Common myeloid progenitor, CD34-positive (primary cell): ENCODE measurements at regions of chr19 and their contacts with region 1.

Region 1: DNA sequence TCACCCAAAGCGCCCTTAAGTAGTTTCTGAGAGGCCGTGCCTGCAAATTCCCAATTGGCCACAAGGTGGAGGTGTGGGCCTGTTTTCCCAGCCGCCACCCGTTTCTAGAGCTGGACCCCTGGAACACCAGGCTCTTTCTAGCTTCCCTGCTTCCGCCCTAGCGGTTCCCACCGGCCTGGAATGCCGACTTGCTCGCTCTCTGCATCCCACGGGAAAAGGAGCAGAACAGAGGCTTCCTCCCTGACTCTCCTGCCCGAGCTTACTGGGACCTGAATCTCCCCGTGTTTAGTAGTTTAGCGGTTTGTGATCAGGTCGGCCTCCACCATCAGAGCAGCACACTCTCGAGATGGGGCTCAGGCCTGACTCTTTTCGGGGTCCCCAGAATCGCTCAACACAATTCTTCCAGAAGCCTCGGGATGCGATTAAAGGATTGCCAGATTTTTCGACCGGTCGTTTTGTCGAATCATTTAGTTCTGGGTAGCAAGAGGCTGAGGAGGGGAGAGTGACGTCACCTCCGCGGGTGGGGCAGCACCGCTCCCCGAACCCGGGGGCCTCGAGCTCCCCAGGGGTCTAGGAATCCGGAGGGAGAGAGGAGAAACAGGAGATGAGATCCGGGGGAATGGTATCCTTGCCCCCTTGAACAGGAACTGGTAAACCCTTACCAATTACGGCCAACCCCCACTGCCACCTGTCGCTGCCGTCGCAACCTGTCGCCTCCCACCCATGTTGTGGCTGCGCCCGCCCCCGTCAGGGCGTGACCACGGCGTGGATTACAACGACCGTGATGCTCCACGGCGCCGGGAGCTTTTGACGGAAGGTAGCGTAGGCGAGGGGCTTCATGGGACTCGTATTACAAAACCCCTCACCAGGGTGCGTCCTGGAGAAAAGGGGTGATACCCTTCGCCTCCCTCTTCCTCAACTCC is 8.0 kb downstream of the NAPSA start:
- DNase-seq: peak; percentile 84 to 95 (median 91)
- H3K4me3 ChIP-seq: peak overlapping the region; percentile 35 to 87 (median 81)
- H3K27ac ChIP-seq: peak overlapping the region; percentile 62 to 87
- H3K4me1 ChIP-seq: peaks cover 0 to 11% (median 8%) of the 10 kb centered on the region in 4 experiments
- H3K27me3 ChIP-seq: peaks cover 0 to 4% (median 0%) of the 10 kb centered on the region in 5 experiments

Region 2: DNA sequence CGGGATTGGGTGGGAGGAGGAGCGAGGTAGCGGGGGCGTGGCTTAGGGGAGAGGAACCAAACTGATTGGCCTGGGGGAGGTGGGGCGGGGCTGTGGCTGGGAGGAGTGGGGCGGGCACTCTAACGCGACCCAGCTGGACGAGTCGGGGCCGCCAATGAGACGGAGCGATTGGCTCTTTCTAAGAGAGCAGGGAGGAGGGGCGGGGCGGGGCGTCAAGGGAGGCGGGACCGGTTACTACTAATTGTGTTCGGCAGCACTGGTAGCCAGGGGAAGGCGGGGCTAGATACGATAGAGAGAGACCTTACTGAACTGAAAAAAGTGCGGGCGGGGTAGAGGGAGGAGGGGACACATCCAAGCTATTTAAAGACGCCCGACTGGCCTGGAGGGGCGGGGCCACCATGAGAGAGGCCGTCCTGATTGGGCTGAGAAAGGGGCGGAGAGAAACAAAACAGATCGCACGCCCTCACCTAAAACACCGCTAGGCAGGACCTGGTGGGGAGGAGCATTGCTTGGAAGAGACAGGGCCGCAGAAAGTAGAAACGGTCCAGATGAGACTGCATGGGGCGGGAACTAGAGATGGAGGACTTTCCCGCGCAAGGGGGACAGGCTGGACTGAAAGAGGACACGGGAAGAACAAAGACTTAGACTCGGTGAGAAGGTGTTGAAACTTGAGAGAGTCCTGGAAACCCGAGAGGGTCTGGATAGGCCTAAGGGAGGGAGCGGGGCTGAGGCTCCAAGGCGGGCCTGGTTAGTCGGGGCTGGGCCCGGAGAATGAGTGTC is 28.1 kb before region 1 on chr19 and contains the start of gene KCNC3:
- CTCF ChIA-PET with region 1: no interaction called
- POLR2A ChIA-PET with region 1: no interaction called
- DNase-seq: peak; percentile 95 to 97 (median 96)
- H3K4me3 ChIP-seq: peak within 1 kb of the TSS in 4 of 7 experiments; percentile 19 to 40 (median 27)
- H3K27ac ChIP-seq: peak within 1 kb of the TSS in 1 of 2 experiments; percentile 68
- H3K4me1 ChIP-seq: peaks cover 2 to 54% (median 33%) of the 10 kb centered on the region in 4 experiments
- H3K27me3 ChIP-seq: peaks cover 0 to 85% (median 35%) of the 10 kb centered on the region in 5 experiments

Region 3: DNA sequence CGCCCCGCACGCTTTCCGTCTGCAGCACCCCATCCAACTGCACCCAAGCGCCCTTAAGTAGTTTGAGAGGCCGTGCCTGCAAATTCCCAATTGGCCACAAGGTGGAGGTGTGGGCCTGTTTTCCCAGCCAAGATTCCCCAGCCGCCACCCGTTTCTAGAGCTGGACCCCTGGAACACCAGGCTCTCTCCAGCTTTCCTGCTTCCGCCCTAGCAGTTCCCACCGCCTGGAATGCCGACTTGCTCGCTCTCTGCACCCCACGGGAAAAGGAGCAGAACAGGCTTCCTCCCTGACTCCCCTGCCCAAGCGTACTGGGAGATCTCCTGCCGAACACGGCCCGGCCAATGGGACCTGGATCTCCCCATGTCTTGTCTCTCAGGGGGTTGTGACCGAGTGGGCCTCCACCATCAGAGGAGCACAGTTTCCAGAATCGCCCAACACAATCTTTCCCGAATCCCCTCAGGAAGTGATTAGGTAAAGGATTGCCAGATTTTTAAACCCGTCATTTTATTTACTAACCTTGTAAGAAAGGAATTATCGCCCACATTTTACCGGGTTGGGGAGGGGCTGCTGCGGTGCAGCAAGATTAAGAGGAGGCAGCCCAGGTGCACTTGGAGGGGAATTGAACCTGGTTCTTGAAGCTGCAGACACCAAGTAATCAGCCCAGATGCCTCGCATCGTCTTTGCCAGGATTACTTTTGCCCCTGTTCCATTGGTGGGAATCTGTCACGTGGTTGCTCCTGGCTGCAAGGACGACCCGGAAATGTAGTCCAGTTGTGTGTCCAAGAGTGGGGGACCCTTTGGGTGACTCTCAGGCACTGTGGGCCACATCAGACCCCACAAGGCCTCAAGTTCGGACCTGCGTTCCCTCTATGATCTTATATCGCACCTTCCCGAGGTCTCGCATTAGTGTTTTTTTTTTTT is 11.5 kb after region 1 on chr19:
- CTCF ChIA-PET with region 1: interaction called, 13 read pairs
- POLR2A ChIA-PET with region 1: no interaction called
- DNase-seq: peak; percentile 85 to 88 (median 86)
- H3K4me3 ChIP-seq: peak overlapping the region; percentile 48 to 99 (median 81)
- H3K27ac ChIP-seq: peak overlapping the region; percentile 8 to 68
- H3K4me1 ChIP-seq: peaks cover 0 to 14% (median 9%) of the 10 kb centered on the region in 4 experiments
- H3K27me3 ChIP-seq: no peaks in the 10 kb centered on the region

Region 4: DNA sequence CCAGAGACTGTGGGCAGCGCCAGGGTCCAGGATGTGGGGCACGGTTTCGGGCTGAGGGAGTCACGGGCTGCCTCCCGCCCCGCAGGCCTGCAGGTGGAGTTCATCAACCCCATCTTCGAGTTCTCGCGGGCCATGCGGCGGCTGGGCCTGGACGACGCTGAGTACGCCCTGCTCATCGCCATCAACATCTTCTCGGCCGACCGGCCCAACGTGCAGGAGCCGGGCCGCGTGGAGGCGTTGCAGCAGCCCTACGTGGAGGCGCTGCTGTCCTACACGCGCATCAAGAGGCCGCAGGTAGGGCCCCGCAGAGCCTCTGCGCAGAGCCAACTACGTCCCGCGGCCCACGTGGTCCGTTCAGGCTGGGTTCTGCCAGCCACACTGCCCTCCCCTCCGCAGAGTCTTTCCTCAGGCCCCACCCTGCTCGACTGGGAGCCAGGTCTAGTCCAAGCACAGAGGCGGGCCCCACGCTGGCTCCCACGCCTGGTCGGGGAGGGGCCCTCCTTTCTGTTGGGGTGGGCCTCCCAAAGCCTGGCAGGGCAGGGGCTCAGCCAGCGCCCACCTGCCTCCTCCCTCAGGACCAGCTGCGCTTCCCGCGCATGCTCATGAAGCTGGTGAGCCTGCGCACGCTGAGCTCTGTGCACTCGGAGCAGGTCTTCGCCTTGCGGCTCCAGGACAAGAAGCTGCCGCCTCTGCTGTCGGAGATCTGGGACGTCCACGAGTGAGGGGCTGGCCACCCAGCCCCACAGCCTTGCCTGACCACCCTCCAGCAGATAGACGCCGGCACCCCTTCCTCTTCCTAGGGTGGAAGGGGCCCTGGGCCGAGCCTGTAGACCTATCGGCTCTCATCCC is 24.7 kb after region 1 on chr19:
- CTCF ChIA-PET with region 1: no interaction called
- POLR2A ChIA-PET with region 1: no interaction called
- DNase-seq: no peak
- H3K4me3 ChIP-seq: no peak overlapping the region
- H3K27ac ChIP-seq: no peak overlapping the region
- H3K4me1 ChIP-seq: peaks cover 2 to 30% (median 23%) of the 10 kb centered on the region in 4 experiments
- H3K27me3 ChIP-seq: no peaks in the 10 kb centered on the region

Region 5: GRCh38 chr19:50461066-50461875 is 103.8 kb after region 1 on chr19:
- CTCF ChIA-PET with region 1: interaction called, 17 read pairs
- POLR2A ChIA-PET with region 1: no interaction called
- DNase-seq: peak; percentile 72 to 77 (median 72)
- H3K4me3 ChIP-seq: no peak overlapping the region
- H3K27ac ChIP-seq: no peak overlapping the region
- H3K4me1 ChIP-seq: no peaks in the 10 kb centered on the region
- H3K27me3 ChIP-seq: peaks cover 0 to 30% (median 6%) of the 10 kb centered on the region in 5 experiments